ENCODE measurements at regions of chr10 and their contacts with region 1.

Region 1: GRCh38 chr10:45464958-45465567 is 91.0 kb downstream of the ALOX5 start:
- DNase-seq: peak; percentile 62 to 75
- ATAC-seq: peak; percentile 97 to 100
- H3K4me3 ChIP-seq: no peak overlapping the region
- H3K27ac ChIP-seq: no peak overlapping the region
- H3K4me1 ChIP-seq: no peaks in the 10 kb centered on the region
- CTCF ChIP-seq: peak; percentile 90
- EP300 ChIP-seq: no peak
- POLR2A ChIP-seq: no peak
- RAD21 ChIP-seq: peak; percentile 93

Region 2: DNA sequence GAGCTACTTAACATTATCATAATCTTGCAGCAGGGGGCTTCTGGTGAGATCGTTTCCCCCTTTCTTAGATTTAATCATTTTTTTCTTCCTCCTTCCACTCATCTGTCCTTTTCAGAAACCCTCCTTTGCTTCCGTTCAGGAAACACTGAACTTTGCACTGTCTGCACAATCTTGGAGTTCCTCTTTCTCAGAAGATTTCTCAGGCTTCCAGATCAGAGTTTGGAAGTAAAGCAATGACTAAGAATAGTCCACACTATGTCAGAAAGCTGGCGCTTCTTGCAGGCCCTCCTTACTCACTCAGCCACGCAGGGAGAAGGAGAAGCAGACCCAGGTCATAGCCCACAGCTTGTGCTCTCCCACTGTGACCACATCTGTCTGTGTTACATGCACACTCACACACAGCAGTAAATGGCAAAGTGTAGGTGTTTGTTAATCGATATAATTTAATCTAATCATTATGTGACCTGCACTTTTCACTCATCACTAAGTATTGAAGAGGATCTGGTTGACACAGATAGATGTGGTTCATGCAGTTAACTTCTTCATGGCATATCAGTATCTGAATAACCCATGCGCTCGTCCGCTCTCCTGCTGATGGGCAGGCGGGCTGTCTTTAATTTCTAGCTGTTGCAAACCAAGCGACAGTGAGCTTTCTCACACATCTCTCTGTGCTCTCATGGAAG is 60.8 kb before region 1 on chr10:
- CTCF ChIA-PET with region 1: no interaction called
- POLR2A ChIA-PET with region 1: no interaction called
- DNase-seq: no peak
- ATAC-seq: peak; percentile 36 to 57; a peak in 4 of 6 replicates
- H3K4me3 ChIP-seq: no peak overlapping the region
- H3K27ac ChIP-seq: no peak overlapping the region
- H3K4me1 ChIP-seq: no peaks in the 10 kb centered on the region
- CTCF ChIP-seq: no peak
- EP300 ChIP-seq: no peak
- POLR2A ChIP-seq: no peak
- RAD21 ChIP-seq: no peak

Region 3: GRCh38 chr10:45427262-45427969 is 37.6 kb before region 1 on chr10:
- CTCF ChIA-PET with region 1: interaction called, 12 read pairs
- POLR2A ChIA-PET with region 1: no interaction called
- DNase-seq: no peak
- ATAC-seq: no peak
- H3K4me3 ChIP-seq: no peak overlapping the region
- H3K27ac ChIP-seq: no peak overlapping the region
- H3K4me1 ChIP-seq: peaks cover 8% of the 10 kb centered on the region; the same call in 1 of the 3 replicates
- CTCF ChIP-seq: no peak
- EP300 ChIP-seq: no peak
- POLR2A ChIP-seq: no peak
- RAD21 ChIP-seq: no peak

Region 4: GRCh38 chr10:45453639-45454255 is 11.3 kb before region 1 on chr10:
- CTCF ChIA-PET with region 1: interaction called, 30 read pairs
- POLR2A ChIA-PET with region 1: no interaction called
- DNase-seq: no peak
- ATAC-seq: no peak
- H3K4me3 ChIP-seq: no peak overlapping the region
- H3K27ac ChIP-seq: no peak overlapping the region
- H3K4me1 ChIP-seq: no peaks in the 10 kb centered on the region
- CTCF ChIP-seq: no peak
- EP300 ChIP-seq: no peak
- POLR2A ChIP-seq: no peak
- RAD21 ChIP-seq: no peak

Region 5: GRCh38 chr10:45487738-45488137 is 22.7 kb after region 1 on chr10:
- CTCF ChIA-PET with region 1: interaction called, 13 read pairs
- POLR2A ChIA-PET with region 1: no interaction called
- DNase-seq: no peak
- ATAC-seq: no peak
- H3K4me3 ChIP-seq: no peak overlapping the region
- H3K27ac ChIP-seq: no peak overlapping the region
- H3K4me1 ChIP-seq: no peaks in the 10 kb centered on the region
- CTCF ChIP-seq: no peak
- EP300 ChIP-seq: no peak
- POLR2A ChIP-seq: no peak
- RAD21 ChIP-seq: no peak

Region 6: DNA sequence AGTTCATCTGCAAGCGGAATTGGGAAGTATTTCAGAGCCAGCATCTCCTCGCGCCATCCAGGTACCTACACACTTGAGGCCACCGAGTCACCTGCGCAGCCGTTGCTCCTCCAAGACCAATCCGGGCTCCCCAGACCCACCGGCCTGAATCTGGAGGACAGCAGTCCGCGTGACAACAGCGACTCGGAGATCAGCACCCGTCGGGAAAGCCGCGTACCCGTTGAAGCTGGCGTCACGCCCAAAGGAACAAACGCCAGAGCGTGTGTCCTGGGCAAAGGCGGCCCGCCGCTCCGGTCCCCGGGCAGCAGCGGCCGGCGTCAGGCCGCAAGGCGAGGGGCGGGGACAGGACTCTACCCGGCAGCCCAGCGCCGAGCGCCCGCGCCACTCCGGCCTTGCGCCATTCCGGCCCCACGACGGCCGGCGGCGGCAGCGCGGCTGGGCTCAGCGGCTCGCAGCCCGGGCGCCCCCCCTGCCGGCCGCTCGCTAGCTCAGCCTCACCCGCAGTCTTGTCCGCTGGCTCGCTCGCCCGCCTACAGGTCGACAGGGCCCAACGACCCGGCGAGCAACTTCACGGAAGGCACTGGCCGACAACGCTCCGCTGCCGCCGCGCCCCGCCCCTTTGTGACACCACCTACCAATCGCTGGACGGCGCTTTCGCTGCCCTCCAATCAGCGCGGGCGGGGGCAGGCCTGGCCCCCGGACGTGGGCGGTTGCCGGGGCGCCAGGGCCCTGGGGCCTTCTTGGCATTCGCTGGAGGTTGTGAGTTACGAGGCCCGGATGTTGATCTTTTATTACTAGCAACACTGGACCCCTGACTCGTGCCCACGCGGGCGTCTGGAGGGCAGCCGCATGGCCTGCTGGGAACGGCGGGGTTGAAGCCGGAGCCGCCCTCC is 207.4 kb after region 1 on chr10 and contains the start of gene ZFAND4:
- CTCF ChIA-PET with region 1: interaction called, 35 read pairs
- POLR2A ChIA-PET with region 1: interaction called, 3 read pairs
- DNase-seq: peak; percentile 96 to 98
- ATAC-seq: peak; percentile 99
- H3K4me3 ChIP-seq: peak within 1 kb of the TSS; percentile 67
- H3K27ac ChIP-seq: peak within 1 kb of the TSS; percentile 80 to 92
- H3K4me1 ChIP-seq: 0 out of 3 replicates have a peak, but pooled peaks cover 3% of the 10 kb centered on the region
- CTCF ChIP-seq: peak; percentile 62
- EP300 ChIP-seq: no peak
- POLR2A ChIP-seq: peak; percentile 40
- RAD21 ChIP-seq: peak; percentile 48 to 82; a peak in 4 of 5 replicates
- polyA plus RNA-seq, gene ZFAND4: 7.4 and 7.7 TPM in 2 replicates